SK-N-SH (cell line): ENCODE measurements at regions of chr22 and their contacts with region 1.

Region 1: DNA sequence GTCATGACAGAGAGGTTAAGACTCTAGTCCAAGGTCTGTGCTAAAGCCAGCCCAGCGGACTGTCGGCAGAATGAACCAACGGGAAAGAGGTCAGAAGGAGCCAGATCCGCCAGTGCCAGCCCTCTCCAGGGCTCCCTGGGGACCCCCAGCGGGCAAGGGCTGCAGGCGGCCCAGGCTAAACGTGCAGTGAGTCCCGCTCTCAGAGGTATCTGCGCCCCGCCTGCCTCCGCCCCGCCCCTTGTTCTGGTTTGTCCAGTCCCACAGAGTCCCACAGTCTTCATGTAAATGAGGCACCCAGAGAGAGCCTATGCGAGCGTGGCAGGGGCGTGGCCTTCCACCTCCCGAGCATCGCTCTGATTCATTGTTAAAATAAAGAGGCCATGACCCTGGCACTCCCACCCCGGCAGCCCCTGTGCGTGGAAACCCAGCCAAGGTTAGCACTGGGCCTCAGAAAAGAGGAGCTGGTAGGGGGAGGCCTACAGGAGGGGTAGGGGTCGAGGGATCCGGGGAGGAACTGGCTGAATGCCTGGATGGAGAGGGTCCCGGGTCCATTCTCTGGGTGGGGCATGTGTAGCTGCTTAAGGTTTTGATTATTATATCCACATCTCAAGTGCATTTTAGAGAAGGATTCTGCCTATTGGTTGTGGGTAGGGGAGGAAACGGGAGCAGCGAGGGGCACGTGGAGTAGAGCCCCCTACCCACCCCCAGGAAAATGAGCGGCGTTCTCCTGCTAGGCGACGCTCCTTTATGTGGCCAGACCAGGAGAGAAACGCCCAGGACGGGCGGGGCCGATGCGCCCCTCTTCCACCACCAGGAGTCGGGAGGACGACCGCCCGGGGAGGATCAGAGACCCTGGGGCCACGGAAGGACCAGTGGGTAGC is at the start of gene TRIOBP:
- DNase-seq: peak; percentile 95
- H3K4me3 ChIP-seq: peak within 1 kb of the TSS; percentile 57 to 82
- H3K27ac ChIP-seq: peak within 1 kb of the TSS; percentile 57 to 80
- H3K4me1 ChIP-seq: peaks cover 6 to 11% of the 10 kb centered on the region in 2 experiments; a peak in 2 of 4 replicates
- H3K27me3 ChIP-seq: no peaks in the 10 kb centered on the region
- CTCF ChIP-seq: peak; percentile 61
- EP300 ChIP-seq: peak in 1 of 2 experiments; percentile 24; a peak in 1 of 4 replicates
- RAD21 ChIP-seq: peak; percentile 64
- polyA plus RNA-seq, gene TRIOBP: 43.6 and 47.3 TPM in 2 replicates

Region 2: DNA sequence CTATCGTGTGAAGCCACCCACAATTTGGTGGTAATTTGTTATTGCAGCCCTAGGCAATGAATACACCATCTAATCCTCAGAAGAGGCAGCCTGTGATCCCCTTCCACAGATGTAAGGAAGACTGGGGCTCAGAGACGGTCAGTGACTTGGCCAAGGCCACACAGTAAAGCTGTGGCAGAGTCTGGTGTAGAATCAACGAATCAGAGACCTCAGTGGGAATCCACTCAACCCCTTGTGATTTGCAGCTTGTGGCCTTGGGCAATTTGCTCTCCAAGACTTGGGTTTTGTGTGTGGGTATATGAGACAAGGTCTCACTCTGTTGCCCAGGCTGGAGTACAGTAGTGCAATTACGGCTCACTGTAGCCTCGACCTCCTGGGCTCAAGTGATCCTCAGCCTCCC is 118.9 kb before region 1 on chr22:
- CTCF ChIA-PET with region 1: no interaction called
- POLR2A ChIA-PET with region 1: no interaction called
- DNase-seq: no peak
- H3K4me3 ChIP-seq: no peak overlapping the region
- H3K27ac ChIP-seq: no peak overlapping the region
- H3K4me1 ChIP-seq: no peaks in the 10 kb centered on the region; a peak in 2 of 4 replicates
- H3K27me3 ChIP-seq: no peaks in the 10 kb centered on the region
- CTCF ChIP-seq: no peak
- EP300 ChIP-seq: no peak
- RAD21 ChIP-seq: no peak

Region 3: GRCh38 chr22:37686002-37686982 is 10.6 kb before region 1 on chr22 and contains the start of gene NOL12:
- CTCF ChIA-PET with region 1: interaction called, 65 read pairs
- POLR2A ChIA-PET with region 1: interaction called, 4 read pairs
- DNase-seq: peak; percentile 91
- H3K4me3 ChIP-seq: peak within 1 kb of the TSS; percentile 79 to 91
- H3K27ac ChIP-seq: peak within 1 kb of the TSS; percentile 84 to 90
- H3K4me1 ChIP-seq: peaks cover 2 to 9% of the 10 kb centered on the region in 2 experiments; a peak in 2 of 4 replicates
- H3K27me3 ChIP-seq: no peaks in the 10 kb centered on the region
- CTCF ChIP-seq: no peak
- EP300 ChIP-seq: no peak
- RAD21 ChIP-seq: no peak
- polyA plus RNA-seq, gene NOL12: 48.2 and 52.2 TPM in 2 replicates

Region 4: DNA sequence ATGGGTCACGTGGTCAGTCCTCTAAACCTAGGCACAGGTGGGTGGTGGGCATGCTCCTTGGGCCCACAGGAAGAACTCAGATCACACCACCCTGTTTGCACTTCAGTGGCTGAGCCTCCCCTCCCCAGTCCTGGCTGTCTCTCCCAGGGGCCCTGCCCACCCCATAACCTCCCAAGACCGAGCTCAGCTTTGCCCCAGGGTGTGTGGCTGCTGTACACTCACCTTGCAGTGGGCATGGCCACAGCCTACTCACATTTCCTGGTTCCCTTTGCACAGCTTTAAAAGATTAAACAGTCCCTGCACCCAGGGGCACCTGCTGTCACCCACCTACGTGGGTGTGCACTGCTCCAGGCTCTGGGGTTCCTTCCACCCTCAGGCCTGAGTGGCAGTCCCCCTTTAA is 13.8 kb after region 1 on chr22:
- CTCF ChIA-PET with region 1: interaction called, 12 read pairs
- POLR2A ChIA-PET with region 1: no interaction called
- DNase-seq: no peak
- H3K4me3 ChIP-seq: no peak overlapping the region
- H3K27ac ChIP-seq: no peak overlapping the region
- H3K4me1 ChIP-seq: no peaks in the 10 kb centered on the region
- H3K27me3 ChIP-seq: no peaks in the 10 kb centered on the region
- CTCF ChIP-seq: no peak
- EP300 ChIP-seq: no peak
- RAD21 ChIP-seq: no peak

Region 5: DNA sequence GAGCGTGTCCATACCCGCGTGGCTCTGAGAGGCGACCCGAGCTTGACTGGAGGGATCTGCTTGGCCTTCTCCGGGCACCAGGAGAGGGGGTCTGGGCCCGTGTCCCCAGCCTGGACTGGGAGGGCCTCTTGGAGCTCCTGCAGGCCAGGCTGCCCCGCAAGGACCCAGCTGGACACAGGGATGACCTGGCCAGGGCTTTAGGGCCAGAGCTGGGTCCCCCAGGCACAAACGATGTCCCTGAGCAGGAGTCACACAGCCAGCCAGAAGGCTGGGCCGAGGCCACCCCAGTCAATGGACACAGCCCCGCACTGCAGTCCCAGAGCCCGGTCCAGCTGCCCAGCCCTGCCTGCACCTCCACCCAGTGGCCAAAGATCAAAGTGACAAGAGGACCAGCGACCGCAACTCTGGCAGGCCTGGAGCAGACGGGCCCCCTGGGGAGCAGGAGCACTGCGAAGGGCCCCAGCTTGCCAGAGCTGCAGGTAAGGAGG is 38.1 kb after region 1 on chr22:
- CTCF ChIA-PET with region 1: interaction called, 29 read pairs
- POLR2A ChIA-PET with region 1: no interaction called
- DNase-seq: peak; percentile 91
- H3K4me3 ChIP-seq: no peak overlapping the region; a peak in 1 of 4 replicates
- H3K27ac ChIP-seq: peak overlapping the region in 1 of 2 experiments; percentile 8; a peak in 1 of 4 replicates
- H3K4me1 ChIP-seq: peaks cover 0 to 10% of the 10 kb centered on the region in 2 experiments; a peak in 1 of 4 replicates
- H3K27me3 ChIP-seq: no peaks in the 10 kb centered on the region
- CTCF ChIP-seq: peak; percentile 41
- EP300 ChIP-seq: no peak
- RAD21 ChIP-seq: peak; percentile 72